Colonic mucosa (tissue), 4 donors: ENCODE measurements at regions of chr7 and their contacts with region 1.

Region 1: GRCh38 chr7:10429511-10429910 is 544.2 kb upstream of the PHF14 start:
- DNase-seq: no peak
- H3K4me3 ChIP-seq: no peak overlapping the region
- H3K27ac ChIP-seq: no peak overlapping the region
- H3K4me1 ChIP-seq: no peaks in the 10 kb centered on the region
- H3K27me3 ChIP-seq: no peaks in the 10 kb centered on the region
- CTCF ChIP-seq: no peak

Region 2: GRCh38 chr7:10471280-10472058 is 42.0 kb after region 1 on chr7:
- intact Hi-C with region 1: loop called (anchors 2 kb)
- DNase-seq: no peak
- H3K4me3 ChIP-seq: no peak overlapping the region
- H3K27ac ChIP-seq: no peak overlapping the region
- H3K4me1 ChIP-seq: no peaks in the 10 kb centered on the region
- H3K27me3 ChIP-seq: no peaks in the 10 kb centered on the region
- CTCF ChIP-seq: no peak